ENCODE measurements at regions of chr2 and their contacts with region 1.

Region 1: DNA sequence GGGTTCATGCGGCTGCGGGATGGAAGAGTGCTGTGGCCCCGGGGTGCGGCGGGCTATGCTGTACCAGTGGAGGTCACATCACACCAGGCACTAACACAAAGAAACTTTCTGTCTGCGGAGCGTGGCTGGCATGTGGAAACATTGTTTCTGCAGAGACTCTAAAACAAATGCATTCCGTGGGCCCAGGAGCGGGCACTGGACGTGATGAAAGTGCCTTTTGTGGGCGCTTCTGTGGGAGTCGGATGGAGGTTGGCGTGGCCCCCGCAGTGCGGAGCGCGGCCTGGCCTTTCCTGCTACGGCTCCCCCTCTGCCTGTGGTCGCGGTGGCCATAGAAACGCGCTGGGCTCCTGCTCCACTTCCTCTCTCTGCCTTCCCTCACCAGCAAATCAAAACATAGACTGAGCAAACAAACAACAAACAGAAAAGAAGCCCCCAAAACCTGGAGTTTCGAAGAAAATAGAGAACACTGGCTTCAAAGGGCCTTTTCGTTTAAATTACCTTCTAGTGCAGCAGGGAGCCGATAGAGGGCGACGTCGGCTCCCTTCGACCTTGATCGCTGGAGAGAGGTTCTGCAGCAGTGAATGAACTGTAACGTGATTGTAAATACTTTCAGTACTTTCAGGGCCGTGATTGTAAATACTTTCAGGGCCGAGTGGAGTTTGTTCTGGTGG is 51.4 kb downstream of the KIF5C start:
- DNase-seq: peak; percentile 61
- ATAC-seq: peak; percentile 75
- H3K4me3 Mint-ChIP-seq: no peak overlapping the region; the same call in 1 of the 2 replicates
- H3K27ac Mint-ChIP-seq: peak overlapping the region; percentile 59
- H3K4me1 Mint-ChIP-seq: peaks cover 73% of the 10 kb centered on the region
- H3K27me3 Mint-ChIP-seq: no peaks in the 10 kb centered on the region
- CTCF ChIP-seq: peak; percentile 47; the same call in 1 of the 2 replicates

Region 2: GRCh38 chr2:148622366-148622765 is 304.1 kb before region 1 on chr2:
- CTCF ChIA-PET with region 1: no interaction called
- POLR2A ChIA-PET with region 1: no interaction called
- DNase-seq: no peak
- ATAC-seq: no peak
- H3K4me3 Mint-ChIP-seq: no peak overlapping the region
- H3K27ac Mint-ChIP-seq: no peak overlapping the region
- H3K4me1 Mint-ChIP-seq: no peaks in the 10 kb centered on the region
- H3K27me3 Mint-ChIP-seq: no peaks in the 10 kb centered on the region
- CTCF ChIP-seq: no peak

Region 3: GRCh38 chr2:148876595-148877402 is 49.6 kb before region 1 on chr2:
- CTCF ChIA-PET with region 1: interaction called, 13 read pairs
- POLR2A ChIA-PET with region 1: interaction called, 3 read pairs
- DNase-seq: peak; percentile 68
- ATAC-seq: peak; percentile 66
- H3K4me3 Mint-ChIP-seq: peak overlapping the region; percentile 92
- H3K27ac Mint-ChIP-seq: peak overlapping the region; percentile 17; the same call in 1 of the 2 replicates
- H3K4me1 Mint-ChIP-seq: peaks cover 20% of the 10 kb centered on the region
- H3K27me3 Mint-ChIP-seq: peaks cover 26% of the 10 kb centered on the region
- CTCF ChIP-seq: no peak

Region 4: GRCh38 chr2:148936859-148937450 is 10.5 kb after region 1 on chr2:
- CTCF ChIA-PET with region 1: interaction called, 12 read pairs
- POLR2A ChIA-PET with region 1: no interaction called
- DNase-seq: no peak
- ATAC-seq: peak; percentile 46
- H3K4me3 Mint-ChIP-seq: no peak overlapping the region
- H3K27ac Mint-ChIP-seq: no peak overlapping the region
- H3K4me1 Mint-ChIP-seq: 0 out of 2 replicates have a peak, but pooled peaks cover 2% of the 10 kb centered on the region
- H3K27me3 Mint-ChIP-seq: no peaks in the 10 kb centered on the region
- CTCF ChIP-seq: no peak

Region 5: DNA sequence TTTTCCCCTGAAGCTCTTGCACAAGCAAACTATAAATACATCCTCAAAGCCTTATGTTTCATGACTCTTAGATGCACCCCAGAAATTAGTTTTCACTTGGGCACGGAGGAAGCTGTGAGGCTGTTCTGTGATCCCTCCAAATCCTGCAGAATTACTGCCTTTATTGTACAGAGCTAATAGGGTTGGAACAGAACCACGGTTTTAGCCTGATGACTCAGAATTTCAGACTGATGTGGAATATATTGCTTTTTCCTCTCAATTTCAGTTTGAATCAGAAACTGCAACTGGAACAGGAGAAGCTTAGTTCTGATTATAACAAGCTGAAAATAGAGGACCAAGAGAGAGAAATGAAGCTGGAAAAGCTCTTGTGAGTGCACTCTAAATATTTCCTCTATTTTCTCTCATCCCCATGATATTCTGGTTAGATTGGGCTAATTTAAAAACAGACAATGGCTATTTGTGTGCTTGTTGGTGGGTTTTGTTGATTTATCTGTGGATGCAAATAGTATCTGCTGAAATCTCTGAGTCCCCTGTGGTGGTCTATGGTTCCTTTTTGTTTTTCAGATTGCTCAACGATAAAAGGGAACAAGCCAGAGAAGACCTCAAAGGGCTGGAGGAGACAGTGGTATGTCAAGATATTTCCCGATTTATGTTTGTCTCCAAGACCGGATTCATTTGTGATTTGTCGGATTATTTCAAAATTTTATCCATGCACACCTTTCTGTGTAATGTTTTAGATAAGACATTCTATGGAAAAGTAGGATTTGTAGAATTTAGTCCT is 73.9 kb after region 1 on chr2:
- CTCF ChIA-PET with region 1: no interaction called
- POLR2A ChIA-PET with region 1: no interaction called
- DNase-seq: no peak
- ATAC-seq: peak; percentile 44
- H3K4me3 Mint-ChIP-seq: peak overlapping the region; percentile 57
- H3K27ac Mint-ChIP-seq: peak overlapping the region; percentile 96
- H3K4me1 Mint-ChIP-seq: peaks cover 51% of the 10 kb centered on the region
- H3K27me3 Mint-ChIP-seq: no peaks in the 10 kb centered on the region
- CTCF ChIP-seq: no peak

Region 6: DNA sequence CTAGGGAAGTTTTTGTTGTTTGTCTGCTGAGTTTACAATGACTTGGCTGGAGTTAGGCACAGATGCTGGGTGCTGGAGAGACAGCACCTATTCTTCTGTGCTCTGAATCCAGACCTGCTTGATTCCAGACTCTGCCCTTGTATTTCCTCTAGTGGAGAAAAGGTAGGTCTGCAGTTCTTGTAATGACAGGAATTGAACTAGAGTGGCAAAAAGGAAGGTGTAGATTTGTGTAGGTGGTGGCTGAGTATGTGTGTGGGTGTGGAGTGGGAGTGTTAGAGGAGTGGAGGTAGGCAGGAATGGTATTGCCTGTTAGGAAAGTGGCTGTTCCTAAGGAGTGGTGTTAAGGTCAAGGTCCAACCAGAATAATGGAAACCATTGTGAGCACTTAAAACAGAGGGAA is 332.1 kb after region 1 on chr2:
- CTCF ChIA-PET with region 1: no interaction called
- POLR2A ChIA-PET with region 1: no interaction called
- DNase-seq: no peak
- ATAC-seq: peak; percentile 74
- H3K4me3 Mint-ChIP-seq: no peak overlapping the region
- H3K27ac Mint-ChIP-seq: no peak overlapping the region
- H3K4me1 Mint-ChIP-seq: peaks cover 10% of the 10 kb centered on the region
- H3K27me3 Mint-ChIP-seq: peaks cover 3% of the 10 kb centered on the region
- CTCF ChIP-seq: 0 out of 2 replicates have a peak, but pooled peaks have one; percentile 16

Measured in WTC11 (cell line).